ENCODE measurements at regions of chr17 and their contacts with region 1.

Region 1: GRCh38 chr17:58006924-58007780 is at the start of gene SRSF1:
- DNase-seq: peak; percentile 95 to 99 (median 98)
- H3K4me3 ChIP-seq: peak within 1 kb of the TSS; percentile 86
- H3K4me3 Mint-ChIP-seq: peak within 1 kb of the TSS; percentile 99 to 100 (median 100)
- H3K27ac ChIP-seq: peak within 1 kb of the TSS; percentile 96
- H3K27ac Mint-ChIP-seq: peak within 1 kb of the TSS; percentile 95 to 100 (median 99)
- H3K4me1 ChIP-seq: peaks cover 39% of the 10 kb centered on the region
- H3K4me1 Mint-ChIP-seq: peaks cover 48 to 59% (median 56%) of the 10 kb centered on the region in 3 donors
- H3K27me3 ChIP-seq: no peaks in the 10 kb centered on the region
- H3K27me3 Mint-ChIP-seq: peaks cover 0 to 10% of the 10 kb centered on the region in 2 donors
- total RNA-seq, gene SRSF1: 469 to 492 TPM

Region 2: GRCh38 chr17:57987580-57988421 is 19.4 kb before region 1 on chr17 and contains the start of gene VEZF1:
- CTCF ChIA-PET with region 1: interaction called, 6 read pairs
- POLR2A ChIA-PET with region 1: interaction called, 18 read pairs
- DNase-seq: peak; percentile 68 to 85 (median 75)
- H3K4me3 ChIP-seq: peak within 1 kb of the TSS; percentile 84
- H3K4me3 Mint-ChIP-seq: peak within 1 kb of the TSS; percentile 94 to 98 (median 94)
- H3K27ac ChIP-seq: peak within 1 kb of the TSS; percentile 59
- H3K27ac Mint-ChIP-seq: peak within 1 kb of the TSS; percentile 87 to 96 (median 94)
- H3K4me1 ChIP-seq: peaks cover 48% of the 10 kb centered on the region
- H3K4me1 Mint-ChIP-seq: peaks cover 59 to 67% (median 62%) of the 10 kb centered on the region in 3 donors
- H3K27me3 ChIP-seq: no peaks in the 10 kb centered on the region
- H3K27me3 Mint-ChIP-seq: peaks cover 0 to 2% of the 10 kb centered on the region in 2 donors
- total RNA-seq, gene VEZF1: 29.1 to 29.5 TPM

Region 3: GRCh38 chr17:58082870-58083490 is 75.8 kb after region 1 on chr17 and contains the start of gene DYNLL2:
- CTCF ChIA-PET with region 1: interaction called, 3 read pairs
- POLR2A ChIA-PET with region 1: interaction called, 24 read pairs
- DNase-seq: peak; percentile 82 to 92 (median 83)
- H3K4me3 ChIP-seq: peak within 1 kb of the TSS; percentile 88
- H3K4me3 Mint-ChIP-seq: peak within 1 kb of the TSS; percentile 88 to 96 (median 91)
- H3K27ac ChIP-seq: peak within 1 kb of the TSS; percentile 90
- H3K27ac Mint-ChIP-seq: peak within 1 kb of the TSS; percentile 79 to 93 (median 90)
- H3K4me1 ChIP-seq: peaks cover 37% of the 10 kb centered on the region
- H3K4me1 Mint-ChIP-seq: peaks cover 33 to 35% (median 35%) of the 10 kb centered on the region in 3 donors
- H3K27me3 ChIP-seq: no peaks in the 10 kb centered on the region
- H3K27me3 Mint-ChIP-seq: peaks cover 0 to 11% of the 10 kb centered on the region in 2 donors
- total RNA-seq, gene DYNLL2: 40.3 to 41.0 TPM

Measured in CD8-positive, alpha-beta memory T cell (primary cell).